Colonic mucosa (tissue), 4 donors: ENCODE measurements at regions of chr6 and their contacts with region 1.

Region 1: DNA sequence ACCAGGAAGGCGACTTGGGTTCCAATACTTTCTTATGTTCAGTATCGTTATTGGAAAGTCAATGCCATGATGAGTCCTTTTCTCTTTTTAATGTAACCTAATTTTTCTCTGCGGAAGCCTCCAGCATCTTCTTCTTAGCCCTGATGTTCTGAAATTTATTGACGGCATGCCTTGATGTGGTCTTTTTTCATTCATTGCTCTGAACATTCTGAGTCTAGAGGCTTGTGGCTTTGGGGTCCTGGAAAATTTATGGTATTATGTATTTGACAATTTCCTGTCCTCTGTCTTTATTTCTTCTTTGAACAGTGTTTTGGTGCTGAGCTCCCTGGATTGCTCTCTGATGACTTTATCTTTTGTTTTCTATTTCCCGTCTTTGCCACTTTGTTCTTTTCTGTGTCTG is 28.7 kb upstream of the MAS1 start:
- DNase-seq: no peak
- H3K4me3 ChIP-seq: no peak overlapping the region
- H3K27ac ChIP-seq: no peak overlapping the region
- H3K4me1 ChIP-seq: no peaks in the 10 kb centered on the region
- H3K27me3 ChIP-seq: no peaks in the 10 kb centered on the region
- CTCF ChIP-seq: no peak

Region 2: DNA sequence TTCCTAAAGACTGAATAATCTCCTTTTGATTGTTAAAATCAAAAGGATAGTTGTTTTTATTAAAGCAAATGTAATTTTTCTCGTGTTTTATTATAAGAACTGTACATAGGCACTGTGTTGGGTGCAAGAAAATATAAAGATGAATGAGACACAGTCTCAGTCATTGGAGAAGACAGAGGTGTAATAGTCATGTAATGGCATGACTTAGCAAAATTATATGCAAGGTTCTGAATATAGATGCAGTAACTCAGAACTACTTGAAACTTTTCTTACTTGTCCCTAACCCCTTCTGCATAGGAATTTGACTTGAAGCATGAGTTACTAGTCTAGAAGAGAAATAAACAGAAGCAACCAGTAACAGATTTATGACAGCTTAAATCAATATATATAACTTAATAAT is 119.9 kb before region 1 on chr6:
- intact Hi-C with region 1: no loop called
- DNase-seq: no peak
- H3K4me3 ChIP-seq: no peak overlapping the region
- H3K27ac ChIP-seq: no peak overlapping the region
- H3K4me1 ChIP-seq: no peaks in the 10 kb centered on the region
- H3K27me3 ChIP-seq: no peaks in the 10 kb centered on the region
- CTCF ChIP-seq: no peak

Region 3: DNA sequence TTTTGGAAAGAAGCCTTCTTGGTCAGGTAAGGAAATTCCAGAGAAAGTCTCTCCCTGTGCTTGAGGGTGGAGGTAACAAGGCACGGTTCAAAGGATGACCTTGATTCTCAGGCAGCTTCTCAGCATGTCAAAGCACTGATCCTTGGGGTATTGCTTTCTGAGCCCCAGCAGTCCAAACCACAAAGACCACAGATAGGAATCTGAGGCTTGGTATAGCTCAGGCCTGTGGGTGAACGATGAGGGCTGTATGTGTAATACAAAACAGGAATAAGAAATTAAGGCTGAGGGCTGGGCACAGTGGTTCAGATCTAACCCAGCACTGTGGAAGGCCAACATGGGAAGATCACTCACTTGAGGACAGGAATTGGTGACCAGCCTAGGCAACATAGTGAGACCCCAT is 189.3 kb after region 1 on chr6:
- intact Hi-C with region 1: loop called (anchors 10 kb)
- DNase-seq: no peak
- H3K4me3 ChIP-seq: no peak overlapping the region
- H3K27ac ChIP-seq: no peak overlapping the region
- H3K4me1 ChIP-seq: no peaks in the 10 kb centered on the region
- H3K27me3 ChIP-seq: no peaks in the 10 kb centered on the region
- CTCF ChIP-seq: no peak

Region 4: DNA sequence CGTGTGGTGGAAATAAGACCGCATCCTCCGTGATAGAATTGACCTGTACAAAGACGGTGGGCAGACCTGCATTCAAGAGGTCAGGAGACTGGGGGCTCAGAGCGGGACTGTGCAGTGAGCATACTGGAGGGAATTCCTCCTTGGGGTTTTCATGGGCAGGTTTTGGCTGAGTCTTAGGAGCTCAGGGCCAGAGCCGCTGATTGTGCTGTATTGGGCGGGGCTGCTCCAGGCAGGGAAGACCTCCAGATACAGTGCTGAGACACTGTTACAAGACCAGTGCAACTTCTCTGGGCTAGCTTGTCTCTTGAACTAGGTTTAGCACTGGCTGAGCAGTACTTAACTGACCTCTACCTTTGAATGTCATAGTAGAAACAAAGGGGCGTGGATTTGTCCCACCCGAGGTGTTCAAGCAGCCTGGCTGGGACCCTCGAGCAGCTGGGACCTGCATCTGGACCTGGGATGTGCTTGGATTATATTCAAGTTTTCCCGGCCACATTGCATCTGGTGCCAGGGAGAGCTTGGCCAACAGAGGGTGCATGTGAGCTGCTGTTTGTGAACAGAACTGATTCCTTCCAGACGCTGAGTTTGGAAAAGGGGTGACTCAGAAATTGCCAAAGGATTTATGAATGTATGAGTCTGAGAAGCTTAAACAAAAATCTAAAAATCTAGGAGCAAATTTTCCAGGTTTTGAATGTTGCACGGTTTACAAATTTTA is 226.1 kb after region 1 on chr6:
- intact Hi-C with region 1: loop called (anchors 10 kb)
- DNase-seq: peak; percentile 79
- H3K4me3 ChIP-seq: no peak overlapping the region
- H3K27ac ChIP-seq: no peak overlapping the region
- H3K4me1 ChIP-seq: peaks cover 5% of the 10 kb centered on the region
- H3K27me3 ChIP-seq: no peaks in the 10 kb centered on the region
- CTCF ChIP-seq: peak; percentile 60

Region 5: GRCh38 chr6:160455541-160456213 is 593.6 kb after region 1 on chr6:
- intact Hi-C with region 1: loop called (anchors 5 kb)
- DNase-seq: peak; percentile 68
- H3K4me3 ChIP-seq: no peak overlapping the region
- H3K27ac ChIP-seq: no peak overlapping the region
- H3K4me1 ChIP-seq: no peaks in the 10 kb centered on the region
- H3K27me3 ChIP-seq: no peaks in the 10 kb centered on the region
- CTCF ChIP-seq: peak; percentile 98

Region 6: GRCh38 chr6:160534050-160534696 is 672.1 kb after region 1 on chr6:
- intact Hi-C with region 1: loop called (anchors 10 kb)
- DNase-seq: peak; percentile 42
- H3K4me3 ChIP-seq: no peak overlapping the region
- H3K27ac ChIP-seq: no peak overlapping the region
- H3K4me1 ChIP-seq: peaks cover 3% of the 10 kb centered on the region
- H3K27me3 ChIP-seq: no peaks in the 10 kb centered on the region
- CTCF ChIP-seq: peak; percentile 93